Common myeloid progenitor, CD34-positive (primary cell): ENCODE measurements at regions of chr10 and their contacts with region 1.

Region 1: DNA sequence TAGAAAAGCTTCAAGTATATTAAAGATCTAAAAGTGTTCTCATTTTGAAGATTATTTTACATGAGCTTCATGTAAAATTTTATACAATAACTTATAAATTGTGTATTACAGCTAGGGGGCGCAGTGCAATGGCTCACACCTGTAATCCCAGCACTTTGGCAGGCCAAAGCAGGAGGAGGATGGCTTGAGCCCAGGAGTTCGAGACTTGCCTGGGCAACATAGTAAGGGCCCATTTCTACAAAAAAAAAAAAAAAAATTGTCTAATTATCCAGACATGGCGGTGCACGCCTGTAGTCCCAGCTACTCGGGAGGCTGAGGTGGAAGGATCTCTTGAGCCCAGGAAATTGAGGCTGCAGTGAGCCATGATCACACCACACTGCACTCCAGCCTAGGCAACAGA is 16.6 kb downstream of the ACBD5 start:
- DNase-seq: peak; percentile 55 to 69 (median 65)
- H3K4me3 ChIP-seq: no peak overlapping the region
- H3K27ac ChIP-seq: no peak overlapping the region
- H3K4me1 ChIP-seq: no peaks in the 10 kb centered on the region
- H3K27me3 ChIP-seq: no peaks in the 10 kb centered on the region

Region 2: DNA sequence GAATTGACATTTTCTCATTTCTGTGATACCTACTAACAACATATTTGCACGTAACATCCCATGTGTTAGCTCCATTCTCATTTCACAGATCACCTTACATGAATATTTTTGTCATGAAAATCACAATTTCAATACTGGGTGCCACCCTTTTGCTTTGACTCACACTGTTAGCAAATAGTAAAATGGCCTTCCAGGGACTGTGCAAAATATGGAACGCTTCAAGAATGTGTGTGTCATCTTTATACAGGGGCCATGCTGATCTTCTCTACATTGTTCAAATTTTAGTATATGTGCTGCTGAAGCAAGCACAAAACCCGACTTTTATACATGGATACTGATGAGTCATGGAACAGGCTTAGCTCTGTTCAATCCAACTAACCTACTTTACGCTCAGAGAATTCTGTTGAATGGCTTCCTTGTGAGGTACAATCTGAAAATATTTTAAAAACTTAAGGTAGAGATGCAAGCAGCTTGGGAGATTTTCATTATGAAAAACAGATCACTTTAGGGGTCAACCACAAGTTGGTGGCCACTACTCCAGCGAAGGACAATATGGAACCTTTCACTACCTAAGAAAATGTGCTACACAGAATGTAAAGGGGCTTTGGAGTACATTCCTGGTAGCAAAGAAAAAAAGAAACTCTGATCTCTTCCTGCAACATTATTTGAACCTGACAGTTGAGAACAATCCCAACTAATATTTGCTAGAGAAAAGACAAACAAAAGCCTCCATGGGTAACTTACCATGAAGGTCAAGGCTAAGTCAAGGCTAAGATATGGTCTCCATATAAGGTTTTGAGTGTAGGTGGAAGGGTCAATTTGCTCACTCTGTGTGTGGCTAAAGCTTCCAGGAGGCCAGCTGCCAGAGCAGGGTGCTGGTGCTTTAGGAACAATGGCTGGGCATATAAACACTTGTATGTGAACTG is 135.6 kb before region 1 on chr10:
- CTCF ChIA-PET with region 1: no interaction called
- POLR2A ChIA-PET with region 1: no interaction called
- DNase-seq: no peak
- H3K4me3 ChIP-seq: no peak overlapping the region
- H3K27ac ChIP-seq: no peak overlapping the region
- H3K4me1 ChIP-seq: no peaks in the 10 kb centered on the region
- H3K27me3 ChIP-seq: no peaks in the 10 kb centered on the region

Region 3: DNA sequence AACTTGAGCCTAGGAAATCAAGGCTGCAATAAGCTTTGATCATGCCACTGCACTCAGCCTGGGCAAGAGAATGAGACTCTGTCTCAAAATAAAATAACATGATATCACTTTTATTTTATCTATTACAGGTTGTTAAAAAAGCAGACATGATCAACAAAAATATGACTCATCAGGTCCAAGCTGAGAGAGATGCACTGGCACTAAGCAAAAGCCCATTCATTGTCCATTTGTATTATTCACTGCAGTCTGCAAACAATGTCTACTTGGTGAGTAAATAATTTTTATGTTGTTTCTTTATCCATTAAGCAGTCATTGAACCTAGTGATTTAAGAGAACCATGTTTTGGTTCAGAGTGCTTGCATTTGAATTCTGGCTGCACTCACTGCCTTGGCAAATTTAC is 65.5 kb before region 1 on chr10:
- CTCF ChIA-PET with region 1: no interaction called
- POLR2A ChIA-PET with region 1: no interaction called
- DNase-seq: no peak
- H3K4me3 ChIP-seq: no peak overlapping the region
- H3K27ac ChIP-seq: no peak overlapping the region
- H3K4me1 ChIP-seq: peaks cover 2 to 25% (median 16%) of the 10 kb centered on the region in 4 experiments
- H3K27me3 ChIP-seq: no peaks in the 10 kb centered on the region

Region 4: DNA sequence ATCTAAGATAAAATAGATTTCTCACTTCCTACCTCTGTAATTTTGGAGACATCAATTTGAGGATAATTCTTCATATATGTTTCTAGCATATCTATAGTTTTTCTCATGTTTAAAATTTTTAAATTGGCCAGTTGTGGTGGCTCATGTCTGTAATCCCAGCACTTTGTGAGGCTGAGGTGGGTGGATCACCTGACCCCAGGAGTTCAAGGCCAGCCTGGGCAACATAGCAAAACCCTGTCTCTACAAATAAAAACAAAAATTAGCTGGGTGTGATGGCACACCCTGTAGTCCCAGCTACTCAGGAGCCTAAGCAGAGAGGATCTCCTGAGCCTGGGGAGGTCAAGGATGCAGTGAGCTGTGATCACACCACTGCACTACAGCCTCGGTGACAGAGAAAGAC is 11.7 kb after region 1 on chr10:
- CTCF ChIA-PET with region 1: interaction called, 18 read pairs
- POLR2A ChIA-PET with region 1: no interaction called
- DNase-seq: no peak
- H3K4me3 ChIP-seq: no peak overlapping the region
- H3K27ac ChIP-seq: no peak overlapping the region
- H3K4me1 ChIP-seq: peaks cover 0 to 12% (median 8%) of the 10 kb centered on the region in 4 experiments
- H3K27me3 ChIP-seq: no peaks in the 10 kb centered on the region

Region 5: DNA sequence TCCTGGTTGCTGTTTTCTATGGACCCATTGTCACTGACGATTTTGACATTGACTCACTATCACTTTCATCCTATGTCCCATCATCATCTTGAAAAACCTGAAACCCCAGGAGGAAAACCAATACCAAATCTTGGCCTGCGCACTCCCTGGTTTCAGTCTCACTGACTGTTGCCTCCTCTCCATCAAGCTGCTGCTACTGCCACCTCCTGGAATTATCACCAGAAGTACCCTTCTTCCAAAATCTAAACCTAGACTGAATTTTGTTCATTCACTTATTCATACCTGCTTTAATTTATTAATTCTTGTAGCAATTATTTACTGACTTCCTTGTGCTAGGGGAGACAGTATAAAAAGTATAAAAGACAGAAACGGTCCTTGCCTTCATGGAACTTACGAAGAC is 61.1 kb after region 1 on chr10:
- CTCF ChIA-PET with region 1: interaction called, 12 read pairs
- POLR2A ChIA-PET with region 1: no interaction called
- DNase-seq: peak; percentile 47 to 64 (median 64)
- H3K4me3 ChIP-seq: no peak overlapping the region
- H3K27ac ChIP-seq: no peak overlapping the region
- H3K4me1 ChIP-seq: no peaks in the 10 kb centered on the region
- H3K27me3 ChIP-seq: no peaks in the 10 kb centered on the region

Region 6: GRCh38 chr10:27360581-27361172 is 136.7 kb after region 1 on chr10:
- CTCF ChIA-PET with region 1: interaction called, 10 read pairs
- POLR2A ChIA-PET with region 1: no interaction called
- DNase-seq: peak; percentile 82 to 92 (median 88)
- H3K4me3 ChIP-seq: no peak overlapping the region
- H3K27ac ChIP-seq: no peak overlapping the region
- H3K4me1 ChIP-seq: no peaks in the 10 kb centered on the region
- H3K27me3 ChIP-seq: no peaks in the 10 kb centered on the region